ENCODE measurements at regions of chr12 and their contacts with region 1.

Region 1: GRCh38 chr12:19288603-19289244 is 150.6 kb upstream of the AEBP2 start:
- DNase-seq: no peak
- H3K4me3 ChIP-seq: no peak overlapping the region
- H3K27ac ChIP-seq: no peak overlapping the region
- H3K4me1 ChIP-seq: no peaks in the 10 kb centered on the region
- H3K27me3 ChIP-seq: no peaks in the 10 kb centered on the region
- CTCF ChIP-seq: peak; percentile 36 to 68 (median 54)

Region 2: GRCh38 chr12:19181666-19182426 is 106.9 kb before region 1 on chr12:
- intact Hi-C with region 1: loop called (anchors 2 kb)
- DNase-seq: no peak
- H3K4me3 ChIP-seq: no peak overlapping the region
- H3K27ac ChIP-seq: no peak overlapping the region
- H3K4me1 ChIP-seq: peaks cover 0 to 6% of the 10 kb centered on the region in 2 donors
- H3K27me3 ChIP-seq: no peaks in the 10 kb centered on the region
- CTCF ChIP-seq: peak in 1 of 3 experiments; percentile 50

Region 3: DNA sequence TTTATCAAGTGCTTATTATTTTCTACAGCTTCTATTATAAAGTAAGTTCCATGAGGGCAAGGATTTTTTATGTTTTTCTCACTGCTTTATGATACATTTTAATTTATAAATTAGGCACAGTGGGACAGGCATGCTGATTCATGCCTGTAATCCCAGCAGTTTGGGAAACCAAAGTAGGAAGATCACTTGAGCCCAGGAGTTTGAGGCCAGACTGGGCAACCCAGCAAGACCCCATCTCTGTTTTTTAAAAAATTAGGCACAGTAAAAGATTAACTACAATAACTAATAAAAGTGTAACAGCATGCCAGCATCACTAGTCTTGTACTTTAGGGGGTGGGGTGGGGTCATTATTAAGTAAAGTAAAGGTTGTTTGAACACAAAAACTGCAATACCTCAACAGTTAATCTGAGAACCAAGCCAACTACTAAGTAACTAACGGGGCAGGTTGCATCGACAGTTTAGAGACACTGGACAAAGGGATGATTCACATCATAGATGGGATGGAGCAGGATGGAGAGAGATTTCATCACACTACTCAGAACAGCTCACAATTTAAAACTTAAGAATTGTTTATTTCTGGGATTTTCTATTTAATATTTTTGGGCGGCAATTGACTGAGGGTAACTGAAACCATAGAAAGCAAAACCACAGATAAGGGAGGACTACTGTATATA is 39.7 kb before region 1 on chr12:
- intact Hi-C with region 1: loop called (anchors 5 kb)
- DNase-seq: no peak
- H3K4me3 ChIP-seq: no peak overlapping the region
- H3K27ac ChIP-seq: no peak overlapping the region
- H3K4me1 ChIP-seq: peaks cover 4 to 8% of the 10 kb centered on the region in 2 donors
- H3K27me3 ChIP-seq: no peaks in the 10 kb centered on the region
- CTCF ChIP-seq: no peak